Activated naive CD8-positive, alpha-beta T cell treated with anti-CD3 and anti-CD28 coated beads, Interleukin-2, amount 10 ng/mL, durations not matched to agents 7 days and 5 days (primary cell): ENCODE measurements at regions of chr11 and their contacts with region 1.

Region 1: GRCh38 chr11:123062158-123062891 is 389 bp upstream of the HSPA8 start:
- DNase-seq: peak; percentile 99
- ATAC-seq: peak; percentile 86
- H3K4me3 Mint-ChIP-seq: peak overlapping the region; percentile 98
- H3K27ac Mint-ChIP-seq: peak overlapping the region; percentile 100
- H3K4me1 Mint-ChIP-seq: peaks cover 47% of the 10 kb centered on the region
- H3K27me3 Mint-ChIP-seq: no peaks in the 10 kb centered on the region

Region 2: GRCh38 chr11:122843281-122844141 is 218.8 kb before region 1 on chr11:
- POLR2A ChIA-PET with region 1: interaction called, 20 read pairs
- DNase-seq: peak; percentile 54
- ATAC-seq: peak; percentile 83
- H3K4me3 Mint-ChIP-seq: peak overlapping the region; percentile 69
- H3K27ac Mint-ChIP-seq: peak overlapping the region; percentile 94
- H3K4me1 Mint-ChIP-seq: peaks cover 60% of the 10 kb centered on the region
- H3K27me3 Mint-ChIP-seq: no peaks in the 10 kb centered on the region

Region 3: GRCh38 chr11:123035831-123036230 is 26.5 kb before region 1 on chr11:
- POLR2A ChIA-PET with region 1: no interaction called
- DNase-seq: no peak
- ATAC-seq: no peak
- H3K4me3 Mint-ChIP-seq: no peak overlapping the region
- H3K27ac Mint-ChIP-seq: no peak overlapping the region
- H3K4me1 Mint-ChIP-seq: peaks cover 9% of the 10 kb centered on the region
- H3K27me3 Mint-ChIP-seq: peaks cover 6% of the 10 kb centered on the region

Region 4: GRCh38 chr11:123046473-123047259 is 15.7 kb before region 1 on chr11:
- POLR2A ChIA-PET with region 1: no interaction called
- DNase-seq: no peak
- ATAC-seq: no peak
- H3K4me3 Mint-ChIP-seq: no peak overlapping the region
- H3K27ac Mint-ChIP-seq: no peak overlapping the region
- H3K4me1 Mint-ChIP-seq: no peaks in the 10 kb centered on the region
- H3K27me3 Mint-ChIP-seq: peaks cover 2% of the 10 kb centered on the region

Region 5: GRCh38 chr11:123083623-123084029 is 21.3 kb after region 1 on chr11:
- POLR2A ChIA-PET with region 1: interaction called, 178 read pairs
- DNase-seq: no peak
- ATAC-seq: no peak
- H3K4me3 Mint-ChIP-seq: no peak overlapping the region
- H3K27ac Mint-ChIP-seq: no peak overlapping the region
- H3K4me1 Mint-ChIP-seq: peaks cover 31% of the 10 kb centered on the region
- H3K27me3 Mint-ChIP-seq: no peaks in the 10 kb centered on the region

Region 6: DNA sequence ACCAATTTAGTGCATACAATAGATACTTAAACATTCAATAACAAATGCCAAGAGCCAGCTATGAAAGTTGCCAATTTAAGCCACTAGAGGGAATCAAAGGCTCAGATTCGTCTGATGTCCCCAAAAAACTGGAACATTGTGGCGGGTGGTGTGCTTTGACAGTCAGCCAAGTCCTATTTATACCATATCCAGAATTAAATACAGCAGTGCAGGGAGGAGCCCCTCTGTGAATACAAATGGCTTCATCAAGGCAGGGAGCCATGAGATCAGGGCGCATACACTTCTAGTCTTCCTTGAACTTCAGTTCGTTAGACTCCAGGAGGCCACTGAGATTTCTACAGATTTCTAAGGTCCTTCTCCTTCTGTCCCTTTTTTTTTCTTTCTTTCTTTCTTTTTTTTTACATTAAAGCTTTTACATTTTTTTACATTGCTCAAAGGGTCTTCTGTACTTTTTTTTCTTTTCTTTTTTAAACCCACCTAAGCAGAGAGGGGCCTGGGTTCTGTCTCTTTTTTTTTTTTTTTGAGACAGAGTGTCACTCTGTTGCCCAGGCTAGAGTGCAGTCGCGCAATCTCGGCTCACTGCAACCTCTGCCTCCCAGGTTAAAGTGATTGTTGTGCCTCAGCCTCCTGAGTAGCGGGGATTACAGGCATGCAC is 41.1 kb after region 1 on chr11:
- POLR2A ChIA-PET with region 1: interaction called, 27 read pairs
- DNase-seq: no peak
- ATAC-seq: peak; percentile 70
- H3K4me3 Mint-ChIP-seq: no peak overlapping the region
- H3K27ac Mint-ChIP-seq: no peak overlapping the region
- H3K4me1 Mint-ChIP-seq: peaks cover 13% of the 10 kb centered on the region
- H3K27me3 Mint-ChIP-seq: peaks cover 9% of the 10 kb centered on the region